ENCODE measurements at regions of chr6 and their contacts with region 1.

Region 1: DNA sequence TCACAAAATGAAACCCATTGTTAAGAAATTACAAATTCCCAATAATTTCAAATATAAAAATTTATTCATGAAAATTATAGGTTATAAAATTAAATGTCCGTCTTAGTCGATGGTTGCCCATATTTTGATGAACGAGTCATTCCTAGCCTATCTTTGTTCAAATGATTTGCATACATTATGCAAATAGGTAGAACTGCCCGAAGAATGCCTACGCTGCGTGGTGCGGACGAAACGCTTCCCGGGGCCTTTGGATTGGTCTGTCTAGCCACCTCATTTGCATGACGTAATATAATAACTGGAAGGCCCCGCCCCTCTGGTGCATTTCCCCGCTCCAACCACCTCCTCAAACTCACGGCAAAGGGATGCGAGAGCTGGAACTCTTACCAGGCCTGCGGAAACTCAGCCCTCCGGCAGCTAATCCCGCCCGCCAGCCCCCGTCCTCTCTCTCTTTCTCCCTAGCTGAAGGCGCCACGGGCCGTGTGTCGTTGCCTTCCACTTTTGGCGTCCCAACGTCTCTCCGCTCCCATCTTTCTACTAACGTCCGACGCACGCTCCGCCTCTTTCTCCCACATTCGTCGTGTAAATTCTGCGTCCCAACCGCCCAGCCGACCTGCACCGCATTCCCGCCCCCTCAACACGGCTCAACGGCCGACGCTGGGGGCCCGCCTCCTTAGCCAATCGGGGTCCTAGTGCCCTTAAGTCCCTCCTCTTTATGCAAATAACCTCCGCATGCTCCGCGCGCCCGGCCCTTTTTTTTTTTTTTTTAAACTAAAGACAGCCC is 520 bp upstream of the PRRC2A start:
- DNase-seq: peak; percentile 97 to 99
- ATAC-seq: peak; percentile 88 to 94 (median 90)
- H3K4me3 ChIP-seq: peak overlapping the region; percentile 88
- H3K27ac ChIP-seq: peak overlapping the region; percentile 96
- H3K4me1 ChIP-seq: peaks cover 16% of the 10 kb centered on the region
- H3K27me3 ChIP-seq: no peaks in the 10 kb centered on the region
- CTCF ChIP-seq: no peak

Region 2: DNA sequence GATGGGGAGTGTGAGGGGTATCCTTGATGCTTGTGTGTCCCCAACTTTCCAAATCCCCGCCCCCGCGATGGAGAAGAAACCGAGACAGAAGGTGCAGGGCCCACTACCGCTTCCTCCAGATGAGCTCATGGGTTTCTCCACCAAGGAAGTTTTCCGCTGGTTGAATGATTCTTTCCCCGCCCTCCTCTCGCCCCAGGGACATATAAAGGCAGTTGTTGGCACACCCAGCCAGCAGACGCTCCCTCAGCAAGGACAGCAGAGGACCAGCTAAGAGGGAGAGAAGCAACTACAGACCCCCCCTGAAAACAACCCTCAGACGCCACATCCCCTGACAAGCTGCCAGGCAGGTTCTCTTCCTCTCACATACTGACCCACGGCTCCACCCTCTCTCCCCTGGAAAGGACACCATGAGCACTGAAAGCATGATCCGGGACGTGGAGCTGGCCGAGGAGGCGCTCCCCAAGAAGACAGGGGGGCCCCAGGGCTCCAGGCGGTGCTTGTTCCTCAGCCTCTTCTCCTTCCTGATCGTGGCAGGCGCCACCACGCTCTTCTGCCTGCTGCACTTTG is 44.6 kb before region 1 on chr6 and contains the start of gene TNF:
- intact Hi-C with region 1: no loop called
- DNase-seq: peak; percentile 56 to 71
- ATAC-seq: peak in 2 of 4 donors; percentile 33 to 48
- H3K4me3 ChIP-seq: peak within 1 kb of the TSS; percentile 54
- H3K27ac ChIP-seq: no peak within 1 kb of the TSS
- H3K4me1 ChIP-seq: no peaks in the 10 kb centered on the region
- H3K27me3 ChIP-seq: no peaks in the 10 kb centered on the region
- CTCF ChIP-seq: no peak
- total RNA-seq, gene TNF: 0.34 to 0.81 (median 0.61) TPM in 3 of 4 donors, not detected in the other

Region 3: DNA sequence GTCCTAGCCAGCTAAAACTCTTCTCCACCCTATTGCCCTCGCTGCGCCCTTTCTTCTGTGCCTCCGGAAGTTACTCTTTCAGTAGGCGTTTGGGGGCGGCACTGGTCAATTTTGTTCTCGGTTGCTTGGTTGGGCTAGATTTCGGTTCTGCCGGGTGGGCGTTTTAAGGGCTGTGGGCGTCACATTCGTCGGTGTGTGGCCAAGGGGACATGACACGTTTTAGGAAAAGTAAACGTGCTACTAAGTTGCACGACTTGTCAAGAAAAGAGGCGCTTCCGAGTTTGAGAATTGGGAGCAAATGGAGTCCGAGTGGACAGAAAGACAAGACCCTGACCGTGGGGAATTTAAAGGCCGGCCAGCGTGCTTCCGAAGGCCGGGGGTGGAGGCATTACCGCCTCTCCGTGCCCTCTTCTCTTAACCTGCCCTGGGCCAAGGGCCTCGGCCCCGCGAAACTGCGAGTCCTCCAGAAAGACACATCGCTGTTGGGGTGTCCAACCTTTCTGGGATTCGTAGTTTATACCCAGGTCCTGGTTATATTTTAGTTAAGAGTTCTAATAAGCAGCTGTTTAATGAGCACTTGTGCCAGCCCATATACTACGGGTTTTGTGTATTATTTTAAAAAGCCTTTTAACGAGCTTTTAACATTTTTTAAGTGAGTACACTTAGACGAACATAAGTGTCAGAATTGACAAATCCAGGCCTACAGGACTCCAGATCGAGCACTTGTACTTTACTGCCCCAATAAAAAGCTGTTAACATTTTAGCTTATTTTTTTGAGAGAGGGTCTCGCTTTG is 33.1 kb after region 1 on chr6:
- intact Hi-C with region 1: loop called (anchors 2 kb)
- DNase-seq: peak; percentile 85 to 91
- ATAC-seq: peak; percentile 76 to 83 (median 79)
- H3K4me3 ChIP-seq: peak overlapping the region; percentile 72
- H3K27ac ChIP-seq: peak overlapping the region; percentile 98
- H3K4me1 ChIP-seq: peaks cover 21% of the 10 kb centered on the region
- H3K27me3 ChIP-seq: no peaks in the 10 kb centered on the region
- CTCF ChIP-seq: no peak

Region 4: DNA sequence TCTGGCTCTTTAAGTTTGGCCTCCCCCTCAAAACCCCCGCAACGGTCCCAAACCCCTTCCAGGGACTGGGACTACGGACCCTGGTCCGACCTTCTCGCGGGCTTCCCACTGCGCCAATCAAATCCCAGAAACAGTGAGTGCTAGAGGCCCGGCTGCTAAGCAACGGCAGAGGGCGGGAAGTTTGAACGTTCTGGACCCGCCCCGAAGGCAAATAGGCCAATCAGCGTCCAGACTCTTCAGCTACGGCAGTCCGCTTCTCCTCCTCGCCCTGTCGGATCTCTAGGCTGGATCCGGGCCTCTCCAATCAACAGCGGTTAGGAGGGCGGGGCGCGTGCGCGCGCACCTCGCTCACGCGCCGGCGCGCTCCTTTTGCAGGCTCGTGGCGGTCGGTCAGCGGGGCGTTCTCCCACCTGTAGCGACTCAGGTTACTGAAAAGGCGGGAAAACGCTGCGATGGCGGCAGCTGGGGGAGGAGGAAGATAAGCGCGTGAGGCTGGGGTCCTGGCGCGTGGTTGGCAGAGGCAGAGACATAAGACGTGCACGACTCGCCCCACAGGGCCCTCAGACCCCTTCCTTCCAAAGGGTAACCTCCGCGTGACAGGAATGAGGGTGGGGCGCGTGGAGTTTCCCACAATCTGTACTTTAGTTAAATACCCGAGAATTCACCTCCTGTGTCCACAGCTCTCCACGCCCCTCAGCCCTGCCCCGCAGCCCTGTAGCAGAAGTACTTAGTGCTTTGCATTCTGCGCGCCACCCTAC is 119.8 kb after region 1 on chr6 and contains the start of gene MSH5:
- intact Hi-C with region 1: no loop called
- DNase-seq: peak; percentile 97 to 99
- ATAC-seq: peak; percentile 99 to 100 (median 100)
- H3K4me3 ChIP-seq: peak within 1 kb of the TSS; percentile 74
- H3K27ac ChIP-seq: no peak within 1 kb of the TSS
- H3K4me1 ChIP-seq: peaks cover 15% of the 10 kb centered on the region
- H3K27me3 ChIP-seq: peaks cover 0 to 2% (median 0%) of the 10 kb centered on the region in 3 donors
- CTCF ChIP-seq: no peak
- total RNA-seq, gene MSH5: 1.7 to 3.0 (median 1.8) TPM

Measured in psoas muscle (tissue), 8 donors.